ENCODE measurements at regions of chr2 and their contacts with region 1.

Region 1: GRCh38 chr2:37402636-37403035 is 58.2 kb downstream of the QPCT start:
- DNase-seq: no peak
- H3K4me3 ChIP-seq: no peak overlapping the region
- H3K27ac ChIP-seq: no peak overlapping the region
- H3K4me1 ChIP-seq: no peaks in the 10 kb centered on the region
- H3K27me3 ChIP-seq: no peaks in the 10 kb centered on the region
- CTCF ChIP-seq: no peak
- POLR2A ChIP-seq: no peak

Region 2: GRCh38 chr2:37324786-37325624 is 77.6 kb before region 1 on chr2 and contains the start of gene PRKD3:
- intact Hi-C with region 1: loop called (anchors 2 kb)
- DNase-seq: peak in 1 of 2 donors; percentile 64
- H3K4me3 ChIP-seq: peak within 1 kb of the TSS; percentile 77 to 94 (median 93)
- H3K27ac ChIP-seq: peak within 1 kb of the TSS; percentile 89 to 91
- H3K4me1 ChIP-seq: no peaks in the 10 kb centered on the region
- H3K27me3 ChIP-seq: no peaks in the 10 kb centered on the region
- CTCF ChIP-seq: peak in 1 of 3 donors; percentile 9
- POLR2A ChIP-seq: peak; percentile 19
- total RNA-seq, gene PRKD3: 46.5 to 57.4 (median 56.2) TPM

Region 3: DNA sequence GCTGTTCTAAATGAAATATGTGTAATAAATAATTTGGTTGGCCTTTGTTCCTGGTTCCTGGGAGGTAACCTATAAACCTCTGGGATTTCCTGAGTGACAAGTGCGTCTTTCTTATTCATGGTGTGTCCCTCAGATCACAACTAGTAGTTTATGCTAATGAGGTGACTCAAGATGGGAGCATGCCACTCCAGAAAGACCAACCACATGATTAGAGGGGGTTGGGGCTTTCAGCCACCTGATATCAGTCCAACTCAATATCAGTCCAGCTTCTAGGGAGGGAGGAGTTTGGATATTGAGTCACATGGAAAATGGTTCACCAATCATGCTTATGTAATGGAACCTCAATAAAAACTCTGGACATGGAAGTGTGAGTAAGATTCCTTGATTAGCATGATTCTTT is 38.4 kb after region 1 on chr2:
- intact Hi-C with region 1: no loop called
- DNase-seq: no peak
- H3K4me3 ChIP-seq: no peak overlapping the region
- H3K27ac ChIP-seq: no peak overlapping the region
- H3K4me1 ChIP-seq: no peaks in the 10 kb centered on the region
- H3K27me3 ChIP-seq: no peaks in the 10 kb centered on the region
- CTCF ChIP-seq: no peak
- POLR2A ChIP-seq: no peak

Measured in breast epithelium (tissue), 4 donors.